Activated CD4-positive, alpha-beta T cell treated with anti-CD3 and anti-CD28 coated beads, Interleukin-2, amount 10 ng/mL, durations not matched to agents 7 days and 5 days (primary cell): ENCODE measurements at regions of chr17 and their contacts with region 1.

Region 1: GRCh38 chr17:39621523-39622379 is 5.0 kb upstream of the PPP1R1B start:
- DNase-seq: peak; percentile 88
- H3K4me3 Mint-ChIP-seq: peak overlapping the region; percentile 57
- H3K27ac Mint-ChIP-seq: peak overlapping the region; percentile 76
- H3K4me1 Mint-ChIP-seq: peaks cover 31% of the 10 kb centered on the region
- H3K27me3 Mint-ChIP-seq: peaks cover 52% of the 10 kb centered on the region

Region 2: GRCh38 chr17:39335704-39336223 is 286.0 kb before region 1 on chr17:
- CTCF ChIA-PET with region 1: no interaction called
- POLR2A ChIA-PET with region 1: no interaction called
- DNase-seq: no peak
- H3K4me3 Mint-ChIP-seq: no peak overlapping the region
- H3K27ac Mint-ChIP-seq: no peak overlapping the region
- H3K4me1 Mint-ChIP-seq: no peaks in the 10 kb centered on the region
- H3K27me3 Mint-ChIP-seq: no peaks in the 10 kb centered on the region

Region 3: DNA sequence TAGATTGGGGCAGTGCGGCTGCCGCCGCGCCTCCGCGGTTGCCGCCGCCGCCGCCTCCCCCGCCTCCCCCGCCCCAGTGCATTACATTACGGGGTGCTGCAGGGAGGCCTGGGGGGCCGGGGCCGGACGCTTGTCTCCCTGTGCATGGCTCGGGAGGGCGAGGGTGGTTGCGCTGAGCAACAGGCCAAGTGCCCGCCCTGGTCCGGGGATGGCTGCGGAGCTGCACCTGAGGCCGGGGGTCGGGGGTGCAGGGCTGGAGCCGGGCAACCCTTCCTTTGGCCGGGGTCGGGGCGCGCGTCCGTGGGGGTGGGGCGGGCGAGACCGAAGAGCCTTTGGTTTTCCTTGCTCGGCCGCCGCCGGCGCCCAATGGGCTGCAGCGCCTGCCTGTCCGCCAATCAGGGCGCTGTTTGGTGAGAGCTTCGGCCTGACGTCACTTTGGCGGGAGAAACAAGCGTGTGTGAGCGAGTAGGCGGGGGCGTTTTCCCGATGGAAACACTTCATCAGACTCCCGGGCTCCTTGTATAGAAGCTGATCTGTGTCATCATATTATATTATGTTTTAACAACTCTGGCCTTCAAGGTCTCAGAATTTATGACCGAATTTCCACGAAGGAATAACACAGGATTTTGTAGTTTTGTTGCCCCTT is 219.4 kb before region 1 on chr17:
- CTCF ChIA-PET with region 1: no interaction called
- POLR2A ChIA-PET with region 1: no interaction called
- DNase-seq: peak; percentile 93
- H3K4me3 Mint-ChIP-seq: peak overlapping the region; percentile 96
- H3K27ac Mint-ChIP-seq: peak overlapping the region; percentile 98
- H3K4me1 Mint-ChIP-seq: peaks cover 45% of the 10 kb centered on the region
- H3K27me3 Mint-ChIP-seq: no peaks in the 10 kb centered on the region

Region 4: GRCh38 chr17:39599004-39599664 is 22.6 kb before region 1 on chr17:
- CTCF ChIA-PET with region 1: interaction called, 16 read pairs
- POLR2A ChIA-PET with region 1: no interaction called
- DNase-seq: no peak
- H3K4me3 Mint-ChIP-seq: no peak overlapping the region
- H3K27ac Mint-ChIP-seq: no peak overlapping the region
- H3K4me1 Mint-ChIP-seq: peaks cover 19% of the 10 kb centered on the region
- H3K27me3 Mint-ChIP-seq: peaks cover 88% of the 10 kb centered on the region

Region 5: DNA sequence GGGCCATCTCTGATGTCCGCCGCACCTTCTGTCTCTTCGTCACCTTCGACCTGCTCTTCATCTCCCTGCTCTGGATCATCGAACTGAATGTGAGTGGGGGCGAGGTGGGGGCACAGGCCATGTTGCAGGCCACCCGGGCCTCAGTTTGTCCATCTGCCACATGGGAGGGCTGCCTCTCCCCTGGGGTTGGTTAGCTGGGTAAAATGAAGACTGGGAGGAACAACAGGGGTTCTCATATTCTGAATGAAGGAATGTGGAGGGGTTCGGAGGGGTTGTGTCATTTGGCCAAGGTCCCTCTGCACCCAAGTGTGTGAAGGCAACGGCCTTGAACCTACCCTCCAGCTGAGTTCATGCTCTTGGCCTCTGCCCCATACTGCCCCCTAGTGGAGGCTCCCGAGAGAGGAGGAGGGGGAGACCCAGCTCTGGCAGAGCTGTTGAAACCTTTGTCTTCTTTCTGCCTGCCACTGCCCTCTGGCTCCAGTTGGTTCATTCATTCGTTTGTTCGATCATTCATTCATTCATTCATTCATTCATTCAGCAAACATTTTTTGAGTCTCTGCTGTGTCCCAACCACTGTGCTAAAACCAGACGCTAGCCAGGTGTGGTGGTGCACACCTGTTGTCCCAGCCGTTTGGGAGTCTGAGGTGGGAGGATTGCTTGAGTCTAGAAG is 32.0 kb after region 1 on chr17:
- CTCF ChIA-PET with region 1: interaction called, 61 read pairs
- POLR2A ChIA-PET with region 1: no interaction called
- DNase-seq: peak; percentile 86
- H3K4me3 Mint-ChIP-seq: no peak overlapping the region
- H3K27ac Mint-ChIP-seq: peak overlapping the region; percentile 46
- H3K4me1 Mint-ChIP-seq: peaks cover 30% of the 10 kb centered on the region
- H3K27me3 Mint-ChIP-seq: no peaks in the 10 kb centered on the region

Region 6: GRCh38 chr17:39730095-39730921 is 108.6 kb after region 1 on chr17 and contains the start of gene MIEN1:
- CTCF ChIA-PET with region 1: interaction called, 24 read pairs
- POLR2A ChIA-PET with region 1: no interaction called
- DNase-seq: peak; percentile 93
- H3K4me3 Mint-ChIP-seq: peak within 1 kb of the TSS; percentile 91
- H3K27ac Mint-ChIP-seq: peak within 1 kb of the TSS; percentile 95
- H3K4me1 Mint-ChIP-seq: peaks cover 22% of the 10 kb centered on the region
- H3K27me3 Mint-ChIP-seq: no peaks in the 10 kb centered on the region
- total RNA-seq, gene MIEN1: 49.7 to 50.2 TPM

Region 7: GRCh38 chr17:39980351-39981206 is 358.8 kb after region 1 on chr17 and contains the start of gene PSMD3:
- CTCF ChIA-PET with region 1: interaction called, 23 read pairs
- POLR2A ChIA-PET with region 1: no interaction called
- DNase-seq: peak; percentile 99
- H3K4me3 Mint-ChIP-seq: peak within 1 kb of the TSS; percentile 94
- H3K27ac Mint-ChIP-seq: peak within 1 kb of the TSS; percentile 91
- H3K4me1 Mint-ChIP-seq: peaks cover 37% of the 10 kb centered on the region
- H3K27me3 Mint-ChIP-seq: peaks cover 10% of the 10 kb centered on the region
- total RNA-seq, gene PSMD3: 88.4 to 94.9 TPM